ENCODE measurements at regions of chr2 and their contacts with region 1.

Region 1: DNA sequence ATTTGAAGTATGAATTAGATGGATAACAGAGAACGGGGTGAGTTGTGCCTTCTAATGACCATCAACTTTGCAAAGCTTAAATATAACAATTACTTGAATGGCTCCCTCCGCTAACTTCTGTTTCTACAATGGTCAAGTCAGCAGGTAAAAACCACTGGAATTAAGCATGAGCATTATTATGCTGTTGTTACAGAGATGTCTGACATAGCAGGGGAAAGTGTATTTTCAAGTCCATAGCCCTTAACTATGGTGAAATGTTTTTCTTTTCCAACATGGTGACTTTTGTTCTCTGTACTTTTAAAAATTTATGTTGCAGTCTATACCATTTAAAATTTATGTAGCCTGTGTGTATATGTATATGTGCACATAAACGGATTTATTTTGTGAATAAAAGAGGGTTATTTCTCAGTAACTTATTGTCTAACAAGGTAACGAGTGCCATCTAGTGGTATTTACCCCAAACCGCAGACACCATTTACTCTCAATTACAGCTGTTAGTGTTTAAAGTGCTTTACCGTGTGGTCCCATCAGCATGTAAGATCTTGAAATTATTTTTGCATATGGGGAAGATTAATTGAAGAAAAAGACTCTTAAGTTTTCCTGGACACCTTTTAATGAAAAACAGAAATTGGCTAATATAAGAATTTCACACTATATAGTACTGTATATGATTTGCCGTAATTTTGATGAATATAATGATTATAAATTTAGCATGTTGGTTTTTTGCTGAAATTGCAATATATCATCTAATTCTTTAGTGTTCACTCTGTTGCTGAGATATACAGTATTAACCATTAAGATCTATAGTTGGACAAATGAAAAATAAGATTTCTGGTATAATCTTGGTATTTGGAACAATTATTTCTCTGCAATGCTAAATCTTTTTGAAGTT is 78.2 kb downstream of the UBE2E3 start:
- DNase-seq: no peak
- ATAC-seq: no peak

Region 2: GRCh38 chr2:180125245-180125962 is 933.2 kb before region 1 on chr2:
- intact Hi-C with region 1: loop called (anchors 10 kb)
- DNase-seq: peak; percentile 41
- ATAC-seq: peak; percentile 94

Region 3: GRCh38 chr2:181218401-181218821 is 159.8 kb after region 1 on chr2:
- intact Hi-C with region 1: no loop called
- DNase-seq: no peak
- ATAC-seq: no peak